Vagina (tissue), 2 donors: ENCODE measurements at regions of chr9 and their contacts with region 1.

Region 1: DNA sequence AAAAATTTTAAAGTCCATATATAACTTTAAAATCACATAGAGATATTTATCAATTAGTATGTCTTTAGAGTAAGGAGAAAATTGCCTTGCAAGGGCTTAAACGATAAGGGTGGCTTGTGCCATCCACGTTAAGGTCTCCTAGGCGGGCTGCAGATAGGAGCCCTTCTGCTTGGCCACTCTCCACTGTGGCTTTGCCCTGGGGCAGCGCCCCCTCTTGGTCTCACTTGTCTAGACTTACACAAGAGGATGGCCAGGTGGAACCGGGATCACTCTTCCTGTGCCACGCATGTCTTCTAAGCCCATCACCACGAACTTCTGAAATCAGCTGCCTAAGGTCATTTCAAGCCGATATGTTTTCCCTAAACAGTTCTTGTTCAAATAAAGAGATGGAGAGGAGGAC is 2.9 kb downstream of the FPGS start:
- DNase-seq: no peak
- H3K4me3 ChIP-seq: no peak overlapping the region
- H3K27ac ChIP-seq: no peak overlapping the region
- H3K4me1 ChIP-seq: peaks cover 37% of the 10 kb centered on the region
- H3K27me3 ChIP-seq: no peaks in the 10 kb centered on the region
- CTCF ChIP-seq: no peak
- POLR2A ChIP-seq: no peak

Region 2: GRCh38 chr9:127825319-127826051 is 19.9 kb after region 1 on chr9:
- intact Hi-C with region 1: loop called (anchors 2 kb)
- DNase-seq: no peak
- H3K4me3 ChIP-seq: no peak overlapping the region
- H3K27ac ChIP-seq: peak overlapping the region; percentile 33
- H3K4me1 ChIP-seq: peaks cover 51% of the 10 kb centered on the region
- H3K27me3 ChIP-seq: no peaks in the 10 kb centered on the region
- CTCF ChIP-seq: peak in 1 of 3 experiments; percentile 21
- POLR2A ChIP-seq: no peak

Region 3: GRCh38 chr9:128448746-128449145 is 643.1 kb after region 1 on chr9:
- intact Hi-C with region 1: no loop called
- DNase-seq: no peak
- H3K4me3 ChIP-seq: no peak overlapping the region
- H3K27ac ChIP-seq: no peak overlapping the region
- H3K4me1 ChIP-seq: no peaks in the 10 kb centered on the region
- H3K27me3 ChIP-seq: no peaks in the 10 kb centered on the region
- CTCF ChIP-seq: no peak
- POLR2A ChIP-seq: no peak